Colonic mucosa (tissue), 4 donors: ENCODE measurements at regions of chr7 and their contacts with region 1.

Region 1: GRCh38 chr7:151759591-151760042 is 117.3 kb downstream of the PRKAG2 start:
- DNase-seq: peak; percentile 66
- H3K4me3 ChIP-seq: no peak overlapping the region
- H3K27ac ChIP-seq: no peak overlapping the region
- H3K4me1 ChIP-seq: peaks cover 14% of the 10 kb centered on the region
- H3K27me3 ChIP-seq: no peaks in the 10 kb centered on the region
- CTCF ChIP-seq: peak; percentile 84

Region 2: DNA sequence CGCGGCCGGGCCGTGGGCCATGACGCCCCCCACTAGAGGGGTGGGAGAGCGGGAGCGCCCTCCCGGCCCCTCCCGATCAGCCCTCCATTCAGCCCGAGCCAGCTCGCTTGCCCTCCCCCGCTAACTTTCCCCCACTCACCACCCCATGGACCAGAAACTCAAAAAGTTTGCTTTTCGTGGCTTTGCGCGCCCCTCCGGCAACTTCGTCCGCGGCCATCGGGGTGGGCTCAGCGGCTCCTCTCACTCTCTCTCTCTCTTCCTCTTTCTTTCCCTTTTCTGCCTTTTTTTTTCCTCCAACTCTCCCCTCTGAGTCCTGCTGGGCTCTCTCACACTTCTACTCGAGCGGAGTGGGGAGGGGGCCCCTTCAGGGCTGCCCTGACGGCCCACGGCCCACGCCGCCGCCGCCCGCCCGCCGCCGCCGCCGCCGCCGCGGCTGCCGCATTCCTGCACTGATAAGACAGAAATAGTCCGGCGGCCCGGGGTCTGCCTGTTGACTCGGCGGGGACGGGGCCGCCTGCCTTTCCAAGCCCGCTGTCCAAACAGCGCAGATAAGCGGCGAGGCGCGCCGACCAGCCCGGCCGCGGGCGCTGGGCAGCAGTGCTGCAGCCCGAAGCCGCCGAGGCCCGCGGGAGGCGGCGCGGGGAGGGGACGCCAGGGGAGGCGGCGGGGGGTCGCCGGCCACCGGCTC is 511.1 kb before region 1 on chr7 and contains the start of gene SMARCD3:
- intact Hi-C with region 1: no loop called
- DNase-seq: peak; percentile 40
- H3K4me3 ChIP-seq: peak within 1 kb of the TSS; percentile 47
- H3K27ac ChIP-seq: peak within 1 kb of the TSS; percentile 70
- H3K4me1 ChIP-seq: peaks cover 8% of the 10 kb centered on the region
- H3K27me3 ChIP-seq: peaks cover 43% of the 10 kb centered on the region
- CTCF ChIP-seq: no peak
- total RNA-seq, gene SMARCD3: 4.3 to 6.7 TPM

Region 3: GRCh38 chr7:151368136-151368571 is 391.5 kb before region 1 on chr7:
- intact Hi-C with region 1: loop called (anchors 5 kb)
- DNase-seq: peak; percentile 85
- H3K4me3 ChIP-seq: no peak overlapping the region
- H3K27ac ChIP-seq: no peak overlapping the region
- H3K4me1 ChIP-seq: peaks cover 5% of the 10 kb centered on the region
- H3K27me3 ChIP-seq: no peaks in the 10 kb centered on the region
- CTCF ChIP-seq: peak; percentile 95

Region 4: GRCh38 chr7:151459726-151460473 is 299.7 kb before region 1 on chr7:
- intact Hi-C with region 1: loop called (anchors 10 kb)
- DNase-seq: peak; percentile 83
- H3K4me3 ChIP-seq: no peak overlapping the region
- H3K27ac ChIP-seq: peak overlapping the region; percentile 73
- H3K4me1 ChIP-seq: peaks cover 11% of the 10 kb centered on the region
- H3K27me3 ChIP-seq: no peaks in the 10 kb centered on the region
- CTCF ChIP-seq: no peak

Region 5: DNA sequence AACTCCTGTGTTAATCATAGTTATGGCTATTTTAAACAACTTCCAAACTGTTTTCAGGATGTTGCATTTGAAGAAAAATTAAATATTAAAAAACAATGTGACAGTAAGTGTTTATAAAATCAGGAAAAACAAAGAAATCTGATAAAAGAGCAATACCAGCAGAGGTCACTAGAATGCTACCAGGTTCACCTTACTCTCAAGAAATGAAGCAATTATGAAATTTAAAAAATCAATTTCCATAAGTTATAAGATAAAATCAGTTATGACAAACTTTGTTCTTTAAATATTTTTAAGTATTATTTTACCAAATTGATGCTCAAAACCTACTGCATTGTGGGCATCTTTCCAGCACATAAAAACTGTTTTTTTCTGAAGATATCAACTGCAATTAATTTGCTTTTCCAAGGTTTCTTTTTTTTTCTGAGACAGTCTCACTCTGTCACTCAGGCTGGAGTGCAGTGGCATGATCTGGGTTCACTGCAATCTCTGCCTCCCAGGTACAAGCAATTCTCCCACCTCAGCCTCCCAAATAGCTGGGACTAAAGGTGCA is 189.2 kb before region 1 on chr7:
- intact Hi-C with region 1: no loop called
- DNase-seq: no peak
- H3K4me3 ChIP-seq: no peak overlapping the region
- H3K27ac ChIP-seq: no peak overlapping the region
- H3K4me1 ChIP-seq: no peaks in the 10 kb centered on the region
- H3K27me3 ChIP-seq: no peaks in the 10 kb centered on the region
- CTCF ChIP-seq: peak; percentile 24

Region 6: DNA sequence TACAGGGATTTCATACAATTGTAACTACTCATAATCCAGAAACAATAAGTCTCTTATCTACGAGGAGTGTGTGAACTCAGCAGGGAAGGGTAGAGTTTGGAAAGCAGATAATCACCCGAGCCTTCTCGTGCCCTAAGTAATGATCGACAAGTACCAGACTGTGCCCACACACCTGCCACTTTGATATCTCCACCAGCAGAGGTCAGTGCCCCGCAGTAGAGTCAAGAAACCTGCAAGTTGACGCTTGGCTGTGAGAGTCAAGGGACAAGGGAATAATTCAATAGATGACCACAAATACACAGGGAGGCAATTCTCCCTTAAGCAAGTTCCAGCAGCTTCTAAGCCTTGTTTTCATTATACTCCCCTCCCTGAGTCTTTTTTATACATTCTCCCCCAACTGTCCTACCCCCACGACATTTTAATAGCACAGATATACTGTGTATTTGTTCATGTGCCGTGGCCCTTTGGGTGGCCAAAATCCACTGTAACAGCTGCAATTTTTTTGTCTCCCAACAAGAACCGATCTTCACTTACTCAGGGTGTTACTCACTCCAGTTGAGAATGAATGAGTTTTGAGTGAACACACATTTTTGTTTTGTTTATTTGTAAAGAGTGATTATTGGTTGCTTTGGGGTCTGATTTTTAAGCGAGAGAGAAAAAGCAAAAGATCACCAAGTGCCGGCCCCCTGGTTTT is 133.0 kb before region 1 on chr7:
- intact Hi-C with region 1: loop called (anchors 5 kb)
- DNase-seq: peak; percentile 50
- H3K4me3 ChIP-seq: no peak overlapping the region
- H3K27ac ChIP-seq: no peak overlapping the region
- H3K4me1 ChIP-seq: peaks cover 6% of the 10 kb centered on the region
- H3K27me3 ChIP-seq: no peaks in the 10 kb centered on the region
- CTCF ChIP-seq: peak; percentile 42

Region 7: DNA sequence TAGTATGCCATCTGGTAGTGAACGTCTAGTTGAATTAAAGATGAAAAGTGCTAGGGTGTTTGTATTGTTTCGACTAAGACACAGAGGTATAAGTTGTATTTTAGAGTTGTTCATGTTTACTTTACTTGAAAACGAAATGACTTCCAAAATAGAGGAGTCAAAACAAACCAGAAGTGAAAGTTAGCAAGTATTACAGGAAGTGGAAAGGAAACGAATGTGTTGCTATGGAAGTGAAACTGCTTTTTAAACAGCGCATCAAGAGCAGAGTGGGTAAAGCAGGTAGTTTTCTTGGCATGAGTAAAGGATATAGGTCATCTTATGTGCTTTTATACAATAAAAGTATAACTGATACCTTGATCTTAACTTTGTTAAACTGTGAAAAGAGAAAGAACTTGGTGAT is 176.6 kb after region 1 on chr7:
- intact Hi-C with region 1: no loop called
- DNase-seq: no peak
- H3K4me3 ChIP-seq: no peak overlapping the region
- H3K27ac ChIP-seq: no peak overlapping the region
- H3K4me1 ChIP-seq: no peaks in the 10 kb centered on the region
- H3K27me3 ChIP-seq: no peaks in the 10 kb centered on the region
- CTCF ChIP-seq: no peak